ENCODE measurements at regions of chr20 and their contacts with region 1.

Region 1: DNA sequence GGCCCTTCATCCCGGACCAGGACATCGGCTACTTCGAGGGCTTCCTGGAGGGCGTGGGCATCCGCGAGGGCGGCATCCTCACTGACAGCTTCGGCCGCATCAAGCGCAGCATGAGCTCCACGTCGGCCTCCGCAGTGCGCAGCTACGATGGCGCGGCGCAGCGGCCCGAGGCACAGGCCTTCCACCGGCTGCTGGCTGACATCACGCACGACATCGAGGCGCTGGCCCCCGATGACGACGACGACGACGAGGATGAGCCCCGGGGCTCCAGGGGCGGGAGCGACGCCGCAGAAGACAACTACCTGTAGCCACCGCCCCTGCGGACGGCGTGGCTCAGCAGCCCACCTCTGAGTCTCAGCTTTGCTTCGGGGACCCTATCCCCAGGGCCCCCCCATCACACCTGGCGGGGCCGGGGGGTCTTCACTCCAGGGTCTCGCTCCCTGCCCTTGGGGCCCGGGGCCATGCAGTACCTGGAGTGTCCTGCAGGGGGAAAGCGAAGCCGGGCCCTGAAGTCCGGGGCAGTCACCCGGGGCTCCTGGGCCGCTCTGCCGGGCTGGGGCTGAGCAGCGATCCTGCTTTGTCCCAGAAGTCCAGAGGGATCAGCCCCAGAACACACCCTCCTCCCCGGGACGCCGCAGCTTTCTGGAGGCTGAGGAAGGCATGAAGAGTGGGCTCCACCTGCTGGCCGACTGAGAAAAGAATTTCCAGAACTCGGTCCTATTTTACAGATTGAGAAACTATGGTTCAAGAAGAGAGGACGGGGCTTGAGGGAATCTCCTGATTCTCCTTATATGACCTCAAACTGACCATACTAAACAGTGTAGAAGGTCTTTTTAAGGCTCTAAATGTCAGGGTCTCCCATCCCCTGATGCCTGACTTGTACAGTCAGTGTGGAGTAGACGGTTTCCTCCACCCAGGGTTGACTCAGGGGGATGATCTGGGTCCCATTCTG is 20.8 kb upstream of the HCK start:
- H3K4me3 Mint-ChIP-seq: peak overlapping the region; percentile 70
- H3K27ac Mint-ChIP-seq: no peak overlapping the region
- H3K4me1 Mint-ChIP-seq: peaks cover 54% of the 10 kb centered on the region
- H3K27me3 Mint-ChIP-seq: peaks cover 6% of the 10 kb centered on the region

Region 2: DNA sequence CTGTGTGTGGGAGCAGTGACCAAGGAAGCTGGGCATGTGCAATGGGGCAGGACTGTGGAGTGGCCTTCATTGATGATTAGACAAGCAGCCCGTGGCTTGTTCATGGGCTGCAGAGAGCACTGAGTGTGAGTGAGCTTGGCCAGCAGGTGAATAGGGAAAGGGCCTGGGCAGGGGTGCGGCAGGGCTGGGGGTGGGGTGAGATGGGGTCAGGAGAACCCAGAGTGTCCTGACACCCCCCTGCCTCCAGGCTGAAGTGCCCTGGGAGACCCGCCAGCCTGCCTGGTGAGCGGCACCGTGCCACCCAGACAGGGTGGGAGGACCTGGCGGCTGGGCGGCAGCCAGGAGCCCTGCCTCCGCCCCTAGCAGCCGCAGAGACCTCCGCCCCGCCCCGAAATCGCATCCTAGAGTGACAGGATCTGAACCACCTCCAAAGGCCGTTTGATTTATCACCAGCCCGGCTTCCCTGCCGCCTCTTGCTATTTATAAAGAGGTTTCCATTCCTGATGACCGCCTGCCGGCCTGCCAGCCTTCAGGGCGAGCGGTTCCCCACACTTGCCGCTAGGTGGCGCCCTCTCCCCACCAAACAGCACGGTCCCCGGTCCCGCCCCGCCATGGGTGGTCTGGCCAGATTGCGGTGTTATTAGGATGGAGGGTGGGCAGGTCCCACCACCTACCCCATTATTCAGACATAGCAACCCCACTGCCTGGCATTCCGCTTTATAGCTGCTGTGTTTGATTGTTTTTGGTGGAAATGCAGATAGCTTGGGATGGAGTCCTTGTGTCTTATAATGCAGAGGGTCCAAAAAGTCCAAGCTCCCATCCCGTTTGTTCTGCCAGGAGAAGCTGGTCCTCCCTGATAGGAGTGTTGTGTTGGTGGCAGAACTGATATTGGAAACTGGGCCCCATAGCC is 208.6 kb before region 1 on chr20:
- intact Hi-C with region 1: loop called (anchors 1 kb)
- H3K4me3 Mint-ChIP-seq: no peak overlapping the region
- H3K27ac Mint-ChIP-seq: no peak overlapping the region
- H3K4me1 Mint-ChIP-seq: no peaks in the 10 kb centered on the region
- H3K27me3 Mint-ChIP-seq: peaks cover 12% of the 10 kb centered on the region

Region 3: DNA sequence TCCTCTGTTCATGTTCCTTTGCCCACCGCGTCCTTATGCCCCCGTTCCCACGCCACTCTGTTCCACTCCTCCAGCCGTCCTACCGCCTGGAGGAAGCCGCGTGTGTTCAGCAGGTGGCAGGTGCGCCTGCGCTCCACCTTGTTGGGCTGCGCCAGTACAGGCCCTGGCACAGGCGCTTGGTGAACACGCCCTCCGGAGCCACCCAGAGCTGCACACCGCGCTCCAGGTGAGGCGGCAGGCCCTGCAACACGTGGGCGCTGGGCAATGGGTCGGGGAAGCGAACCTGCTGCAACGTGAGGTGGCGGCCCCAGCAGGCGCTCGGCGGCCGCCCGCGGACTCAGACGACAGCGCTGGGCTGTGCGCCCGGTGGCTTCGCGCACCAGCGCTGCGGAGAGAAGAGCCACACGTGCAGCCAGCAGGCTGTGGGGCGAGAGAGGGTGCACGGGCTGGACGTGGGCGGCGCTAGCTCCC is 181.8 kb before region 1 on chr20:
- intact Hi-C with region 1: loop called (anchors 1 kb)
- H3K4me3 Mint-ChIP-seq: no peak overlapping the region
- H3K27ac Mint-ChIP-seq: no peak overlapping the region
- H3K4me1 Mint-ChIP-seq: no peaks in the 10 kb centered on the region
- H3K27me3 Mint-ChIP-seq: peaks cover 35% of the 10 kb centered on the region

Region 4: DNA sequence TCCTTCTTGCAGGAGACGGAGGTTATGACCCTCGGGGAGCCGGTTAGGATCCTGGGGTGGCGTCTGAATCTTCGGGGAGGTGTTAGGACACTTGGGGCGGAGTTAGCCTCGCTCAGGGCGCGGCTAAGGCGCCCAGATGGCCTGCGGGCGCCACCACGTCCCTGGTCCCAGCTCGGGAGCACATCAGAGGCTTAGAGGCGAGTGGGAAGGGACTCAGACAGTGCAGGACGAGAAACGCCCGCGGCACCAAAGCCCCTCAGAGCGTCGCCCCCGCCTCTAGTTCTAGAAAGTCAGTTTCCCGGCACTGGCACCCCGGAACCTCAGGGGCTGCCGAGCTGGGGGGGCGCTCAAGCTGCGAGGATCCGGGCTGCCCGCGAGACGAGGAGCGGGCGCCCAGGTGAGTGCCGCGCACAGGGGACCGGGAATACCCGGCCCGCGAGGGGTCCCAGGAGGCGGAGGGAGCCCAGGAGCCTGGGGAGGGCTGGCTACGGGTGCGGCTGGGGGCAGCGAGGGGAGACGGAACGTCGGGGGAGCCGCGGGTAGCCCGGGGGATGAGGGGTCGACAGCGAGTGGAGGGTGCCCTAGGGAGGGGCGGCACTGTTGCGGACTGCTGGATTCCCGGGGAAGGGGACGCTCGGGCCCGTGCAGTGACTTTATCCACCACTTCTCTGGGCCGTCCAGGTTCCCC is 21.0 kb after region 1 on chr20 and contains the start of gene HCK:
- intact Hi-C with region 1: loop called (anchors 2 kb)
- H3K4me3 Mint-ChIP-seq: peak within 1 kb of the TSS; percentile 85
- H3K27ac Mint-ChIP-seq: peak within 1 kb of the TSS; percentile 99
- H3K4me1 Mint-ChIP-seq: peaks cover 60% of the 10 kb centered on the region
- H3K27me3 Mint-ChIP-seq: no peaks in the 10 kb centered on the region

Region 5: GRCh38 chr20:32067234-32067821 is 36.0 kb after region 1 on chr20:
- intact Hi-C with region 1: loop called (anchors 5 kb)
- H3K4me3 Mint-ChIP-seq: peak overlapping the region; percentile 30
- H3K27ac Mint-ChIP-seq: peak overlapping the region; percentile 87
- H3K4me1 Mint-ChIP-seq: peaks cover 83% of the 10 kb centered on the region
- H3K27me3 Mint-ChIP-seq: no peaks in the 10 kb centered on the region

Region 6: DNA sequence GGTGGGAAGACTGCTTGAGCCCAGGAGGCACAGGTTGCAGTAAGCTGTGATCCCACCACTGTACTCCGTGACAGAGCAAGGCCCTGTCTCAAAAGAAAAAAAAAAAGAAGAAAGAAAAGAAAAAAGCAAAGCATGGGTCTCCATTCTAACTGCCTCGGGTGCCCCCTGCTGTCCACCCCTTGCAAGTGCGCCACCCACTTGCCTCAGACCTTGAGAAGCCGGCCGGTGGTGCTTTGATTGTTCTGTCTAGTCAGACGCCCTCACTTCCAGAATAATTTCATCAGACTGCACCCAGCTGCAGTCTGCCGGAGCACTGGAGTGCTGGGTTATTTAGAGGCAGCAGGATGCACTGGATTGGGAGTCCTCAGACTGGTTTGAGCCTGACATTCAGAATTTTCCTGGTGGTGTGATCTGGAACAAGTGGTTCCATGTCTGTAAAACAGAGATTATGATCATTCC is 60.6 kb after region 1 on chr20:
- intact Hi-C with region 1: loop called (anchors 1 kb)
- H3K4me3 Mint-ChIP-seq: no peak overlapping the region
- H3K27ac Mint-ChIP-seq: no peak overlapping the region
- H3K4me1 Mint-ChIP-seq: peaks cover 23% of the 10 kb centered on the region
- H3K27me3 Mint-ChIP-seq: no peaks in the 10 kb centered on the region

Region 7: GRCh38 chr20:32652739-32653526 is 621.6 kb after region 1 on chr20:
- intact Hi-C with region 1: loop called (anchors 5 kb)
- H3K4me3 Mint-ChIP-seq: no peak overlapping the region
- H3K27ac Mint-ChIP-seq: no peak overlapping the region
- H3K4me1 Mint-ChIP-seq: peaks cover 41% of the 10 kb centered on the region
- H3K27me3 Mint-ChIP-seq: peaks cover 8% of the 10 kb centered on the region

Measured in dendritic cell treated with granulocyte-macrophage colony-stimulating factor and Interleukin-4, amounts not matched to agents 40 ng/mL and 50 ng/mL, for 4 days (primary cell).